AG04449 (cell line): ENCODE measurements at regions of chr12 and their contacts with region 1.

Region 1: GRCh38 chr12:452667-453210 is 7.0 kb upstream of the B4GALNT3 start:
- DNase-seq: no peak
- H3K4me3 ChIP-seq: no peak overlapping the region
- CTCF ChIP-seq: peak; percentile 0

Region 2: GRCh38 chr12:464484-465267 is 11.9 kb after region 1 on chr12:
- CTCF ChIA-PET with region 1: interaction called, 44 read pairs
- POLR2A ChIA-PET with region 1: no interaction called
- DNase-seq: no peak
- H3K4me3 ChIP-seq: no peak overlapping the region
- CTCF ChIP-seq: no peak

Region 3: GRCh38 chr12:510071-510825 is 57.5 kb after region 1 on chr12:
- CTCF ChIA-PET with region 1: interaction called, 21 read pairs
- POLR2A ChIA-PET with region 1: no interaction called
- DNase-seq: no peak
- H3K4me3 ChIP-seq: no peak overlapping the region
- CTCF ChIP-seq: no peak

Region 4: DNA sequence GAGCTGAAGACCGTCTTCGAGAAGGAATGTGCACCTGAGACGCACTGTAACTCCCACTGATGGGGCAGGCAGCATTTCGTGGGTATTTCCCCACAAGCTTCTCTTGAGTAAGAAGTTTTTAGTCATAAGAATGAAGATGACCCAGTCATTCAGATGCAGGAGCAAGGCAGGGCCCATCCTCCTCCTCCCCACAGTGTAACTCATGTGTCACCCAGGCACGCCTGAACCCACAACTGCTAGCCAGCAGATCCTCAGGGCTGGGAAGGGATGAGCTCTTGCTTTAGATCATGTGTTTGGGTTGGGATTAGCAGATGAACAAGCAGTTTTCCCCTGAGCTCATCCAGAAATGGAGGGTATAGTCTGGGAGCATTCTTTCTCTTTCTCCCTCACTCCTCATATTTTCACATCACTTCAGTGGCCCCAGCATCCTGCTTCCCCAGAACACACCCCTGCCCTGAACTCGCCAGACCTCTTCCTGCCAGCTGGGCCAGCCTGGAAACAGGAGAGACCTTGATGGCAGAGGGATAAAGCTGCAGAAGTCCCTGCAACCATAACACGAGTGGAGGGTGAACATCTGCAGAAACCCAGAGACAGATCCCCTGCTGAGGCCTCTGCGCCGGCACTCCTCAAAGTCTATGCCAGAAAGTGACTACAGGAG is 80.3 kb after region 1 on chr12:
- CTCF ChIA-PET with region 1: interaction called, 217 read pairs
- POLR2A ChIA-PET with region 1: no interaction called
- DNase-seq: peak; percentile 82
- H3K4me3 ChIP-seq: no peak overlapping the region
- CTCF ChIP-seq: no peak

Region 5: DNA sequence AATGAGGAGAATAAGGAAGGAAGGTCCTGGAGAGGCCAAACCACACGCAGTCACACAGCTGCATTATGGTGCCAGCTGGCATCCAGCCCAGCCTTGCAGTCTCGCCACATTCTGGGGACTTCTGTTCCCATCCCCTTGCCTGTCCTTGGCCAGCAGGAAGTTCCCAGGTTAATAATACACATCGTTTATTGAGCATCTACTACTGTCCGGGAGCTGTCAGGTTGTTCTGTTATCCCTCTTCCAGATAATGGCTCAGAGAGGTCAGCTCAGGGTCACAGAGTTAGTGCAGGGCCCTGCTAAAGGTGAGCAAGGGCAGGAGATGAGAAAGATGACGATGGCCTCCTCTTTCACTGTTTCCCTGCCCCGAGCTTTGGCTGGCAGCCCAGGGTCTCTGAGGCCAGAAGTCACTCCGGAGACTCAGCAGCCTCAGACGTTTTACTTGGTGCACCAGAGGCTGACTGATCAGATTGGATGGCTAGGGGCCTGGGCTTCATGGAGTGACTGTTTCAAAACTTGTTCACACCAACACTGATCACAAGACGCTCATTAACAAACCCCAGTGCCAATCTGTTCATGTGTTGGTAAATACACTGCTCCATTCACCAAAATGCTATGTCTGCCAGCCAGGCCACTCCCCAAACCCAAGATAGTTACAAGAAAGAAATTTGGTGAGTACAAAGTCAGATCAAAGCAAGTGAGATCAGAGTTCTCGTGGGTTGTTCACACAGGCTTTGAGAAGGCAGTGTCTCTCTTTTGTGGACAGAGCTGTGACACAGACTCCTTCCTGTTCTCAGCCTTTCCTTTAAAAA is 86.2 kb after region 1 on chr12:
- CTCF ChIA-PET with region 1: interaction called, 217 read pairs
- POLR2A ChIA-PET with region 1: no interaction called
- DNase-seq: no peak
- H3K4me3 ChIP-seq: no peak overlapping the region
- CTCF ChIP-seq: no peak

Region 6: GRCh38 chr12:553205-554000 is 100.7 kb after region 1 on chr12:
- CTCF ChIA-PET with region 1: interaction called, 236 read pairs
- POLR2A ChIA-PET with region 1: no interaction called
- DNase-seq: no peak
- H3K4me3 ChIP-seq: no peak overlapping the region
- CTCF ChIP-seq: no peak